ENCODE measurements at regions of chr1 and their contacts with region 1.

Region 1: DNA sequence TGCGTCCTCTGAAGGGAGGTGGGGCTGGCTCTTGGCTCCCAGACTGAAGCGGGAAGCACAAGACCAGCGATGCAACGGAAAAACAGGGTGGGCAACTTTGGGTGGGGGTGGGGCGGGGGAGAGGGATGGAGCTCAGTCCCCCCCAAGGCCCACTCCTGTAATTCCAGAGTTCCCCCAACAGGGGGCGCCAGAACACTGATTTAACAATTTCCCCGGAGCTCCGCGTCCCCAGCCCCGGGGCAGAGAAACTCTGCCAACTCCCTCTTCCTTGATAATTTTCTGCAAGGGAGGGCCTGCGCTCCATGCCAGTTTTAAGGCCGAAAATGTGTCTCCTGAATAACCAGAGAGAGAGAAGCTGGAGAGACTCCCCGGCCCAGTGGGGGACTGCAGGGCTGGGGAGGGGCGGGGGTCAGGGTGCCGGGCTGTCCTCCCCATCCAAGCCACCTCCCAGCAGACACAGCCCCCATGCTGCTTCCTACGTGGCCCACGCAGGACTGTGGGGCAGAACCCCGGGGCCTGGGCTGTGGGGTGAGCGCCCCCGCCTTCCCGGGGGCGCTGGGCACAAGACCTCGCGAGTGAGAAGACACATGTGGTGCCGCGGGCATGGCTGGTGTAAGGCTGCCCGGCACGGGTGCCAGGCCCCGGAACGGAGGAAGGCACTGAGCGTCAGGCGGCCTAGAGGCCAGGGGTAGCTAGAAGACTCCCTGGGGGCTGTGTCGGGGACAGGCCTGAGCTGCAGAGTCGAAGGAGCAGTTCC is 51.4 kb downstream of the KIF21B start:
- DNase-seq: no peak
- ATAC-seq: no peak
- H3K4me3 ChIP-seq: no peak overlapping the region
- H3K27ac ChIP-seq: no peak overlapping the region
- H3K4me1 ChIP-seq: peaks cover 23% of the 10 kb centered on the region
- H3K27me3 ChIP-seq: no peaks in the 10 kb centered on the region
- CTCF ChIP-seq: peak; percentile 62 to 82 (median 75)
- EP300 ChIP-seq: no peak
- POLR2A ChIP-seq: no peak
- RAD21 ChIP-seq: peak; percentile 88

Region 2: GRCh38 chr1:200558866-200559459 is 413.2 kb before region 1 on chr1:
- CTCF ChIA-PET with region 1: interaction called, 25 read pairs
- POLR2A ChIA-PET with region 1: no interaction called
- RAD21 ChIA-PET with region 1: interaction called, 13 read pairs
- SMC1A ChIA-PET with region 1: interaction called, 6 read pairs
- in situ Hi-C with region 1: no loop called
- intact Hi-C with region 1: loop called (anchors 2 kb)
- DNase-seq: no peak
- ATAC-seq: peak; percentile 64
- H3K4me3 ChIP-seq: no peak overlapping the region
- H3K27ac ChIP-seq: no peak overlapping the region
- H3K4me1 ChIP-seq: peaks cover 17% of the 10 kb centered on the region
- H3K27me3 ChIP-seq: no peaks in the 10 kb centered on the region
- CTCF ChIP-seq: peak; percentile 56 to 77 (median 60)
- EP300 ChIP-seq: no peak
- POLR2A ChIP-seq: no peak
- RAD21 ChIP-seq: peak; percentile 82

Region 3: DNA sequence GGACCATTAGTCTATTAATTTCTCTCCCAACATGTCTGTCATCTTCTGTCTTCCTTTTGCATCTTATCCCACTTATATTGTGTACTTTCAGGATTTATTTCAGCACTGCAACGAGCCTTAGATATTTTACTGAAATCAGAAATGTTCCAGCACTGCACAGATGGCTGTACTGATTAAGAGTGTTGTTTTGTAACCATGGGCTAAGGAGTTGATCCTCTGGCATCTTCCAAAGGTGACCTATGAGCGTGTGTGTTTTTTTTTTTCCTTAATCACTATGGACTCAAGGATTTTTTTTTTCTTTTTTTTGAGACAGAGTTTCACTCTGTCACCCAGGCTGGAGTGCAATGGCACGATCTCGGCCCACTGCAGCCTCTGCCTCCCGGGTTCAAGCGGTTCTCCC is 295.3 kb before region 1 on chr1:
- CTCF ChIA-PET with region 1: no interaction called
- POLR2A ChIA-PET with region 1: no interaction called
- RAD21 ChIA-PET with region 1: no interaction called
- SMC1A ChIA-PET with region 1: no interaction called
- in situ Hi-C with region 1: no loop called
- intact Hi-C with region 1: no loop called
- DNase-seq: no peak
- ATAC-seq: no peak
- H3K4me3 ChIP-seq: no peak overlapping the region
- H3K27ac ChIP-seq: no peak overlapping the region
- H3K4me1 ChIP-seq: no peaks in the 10 kb centered on the region
- H3K27me3 ChIP-seq: no peaks in the 10 kb centered on the region
- CTCF ChIP-seq: no peak
- EP300 ChIP-seq: no peak
- POLR2A ChIP-seq: no peak
- RAD21 ChIP-seq: no peak

Region 4: DNA sequence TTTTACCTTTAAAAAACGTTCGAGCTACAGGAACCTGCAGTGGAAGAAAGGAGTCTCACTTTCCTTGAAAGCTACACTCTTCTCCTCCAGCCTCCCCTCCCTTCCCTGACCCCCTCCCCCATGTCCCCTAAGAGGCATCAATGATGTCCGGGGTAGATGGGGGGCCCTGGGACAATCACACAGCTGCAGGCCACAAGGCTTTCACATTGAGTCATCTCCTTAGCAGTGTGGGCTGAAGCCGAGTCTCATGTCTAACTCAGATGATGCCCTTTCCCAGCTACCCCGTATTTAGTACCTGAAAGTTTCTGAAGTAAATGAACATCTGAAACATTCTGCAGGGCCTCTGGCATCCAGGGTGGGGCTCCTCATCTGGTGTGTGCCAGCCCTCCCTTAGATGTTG is 105.6 kb before region 1 on chr1:
- CTCF ChIA-PET with region 1: interaction called, 23 read pairs
- POLR2A ChIA-PET with region 1: interaction called, 6 read pairs
- RAD21 ChIA-PET with region 1: interaction called, 50 read pairs
- SMC1A ChIA-PET with region 1: interaction called, 38 read pairs
- in situ Hi-C with region 1: no loop called
- intact Hi-C with region 1: loop called (anchors 2 kb)
- DNase-seq: peak; percentile 98
- ATAC-seq: peak; percentile 74
- H3K4me3 ChIP-seq: no peak overlapping the region
- H3K27ac ChIP-seq: peak overlapping the region; percentile 71
- H3K4me1 ChIP-seq: peaks cover 71% of the 10 kb centered on the region
- H3K27me3 ChIP-seq: no peaks in the 10 kb centered on the region
- CTCF ChIP-seq: no peak
- EP300 ChIP-seq: peak; percentile 96 to 97
- POLR2A ChIP-seq: no peak
- RAD21 ChIP-seq: peak; percentile 22; the same call in 1 of the 2 replicates

Region 5: DNA sequence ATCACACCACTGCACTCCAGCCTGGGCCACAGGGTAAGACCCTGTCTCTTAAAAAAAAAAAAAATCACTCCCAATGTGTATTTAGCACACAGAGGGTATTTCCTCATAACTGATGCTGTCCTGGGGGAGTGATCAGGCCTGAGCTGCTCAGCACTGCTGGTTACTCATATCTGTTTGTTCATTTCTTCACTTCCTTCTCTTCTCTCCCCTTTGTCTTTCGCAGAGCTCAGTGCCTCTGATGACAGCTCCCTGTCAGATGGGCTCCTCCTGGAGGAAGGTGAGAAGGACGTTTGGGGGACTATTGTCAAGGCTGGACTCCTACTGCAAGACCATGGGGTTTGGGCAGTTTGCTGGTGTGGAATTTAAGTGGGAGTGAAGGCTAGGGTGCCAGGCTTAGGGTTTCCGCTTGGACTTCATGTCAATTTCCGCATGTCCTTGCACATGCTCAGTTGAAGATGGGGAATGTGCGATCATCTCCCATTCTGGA is 64.5 kb before region 1 on chr1:
- CTCF ChIA-PET with region 1: interaction called, 29 read pairs
- POLR2A ChIA-PET with region 1: interaction called, 10 read pairs
- RAD21 ChIA-PET with region 1: interaction called, 31 read pairs
- SMC1A ChIA-PET with region 1: interaction called, 13 read pairs
- in situ Hi-C with region 1: no loop called
- intact Hi-C with region 1: loop called (anchors 2 kb)
- DNase-seq: peak; percentile 67
- ATAC-seq: peak; percentile 74
- H3K4me3 ChIP-seq: no peak overlapping the region
- H3K27ac ChIP-seq: no peak overlapping the region
- H3K4me1 ChIP-seq: peaks cover 15% of the 10 kb centered on the region
- H3K27me3 ChIP-seq: no peaks in the 10 kb centered on the region
- CTCF ChIP-seq: peak in 1 of 3 experiments; percentile 26; a peak in 1 of 6 replicates
- EP300 ChIP-seq: peak; percentile 44 to 60; a peak in 2 of 4 replicates
- POLR2A ChIP-seq: no peak
- RAD21 ChIP-seq: peak; percentile 46

Region 6: GRCh38 chr1:201016211-201016651 is 44.1 kb after region 1 on chr1:
- CTCF ChIA-PET with region 1: interaction called, 138 read pairs
- POLR2A ChIA-PET with region 1: interaction called, 27 read pairs
- RAD21 ChIA-PET with region 1: interaction called, 239 read pairs
- SMC1A ChIA-PET with region 1: interaction called, 37 read pairs
- in situ Hi-C with region 1: no loop called
- intact Hi-C with region 1: no loop called
- DNase-seq: no peak
- ATAC-seq: no peak
- H3K4me3 ChIP-seq: no peak overlapping the region
- H3K27ac ChIP-seq: no peak overlapping the region
- H3K4me1 ChIP-seq: peaks cover 51% of the 10 kb centered on the region
- H3K27me3 ChIP-seq: no peaks in the 10 kb centered on the region
- CTCF ChIP-seq: no peak
- EP300 ChIP-seq: no peak
- POLR2A ChIP-seq: no peak
- RAD21 ChIP-seq: no peak

Region 7: DNA sequence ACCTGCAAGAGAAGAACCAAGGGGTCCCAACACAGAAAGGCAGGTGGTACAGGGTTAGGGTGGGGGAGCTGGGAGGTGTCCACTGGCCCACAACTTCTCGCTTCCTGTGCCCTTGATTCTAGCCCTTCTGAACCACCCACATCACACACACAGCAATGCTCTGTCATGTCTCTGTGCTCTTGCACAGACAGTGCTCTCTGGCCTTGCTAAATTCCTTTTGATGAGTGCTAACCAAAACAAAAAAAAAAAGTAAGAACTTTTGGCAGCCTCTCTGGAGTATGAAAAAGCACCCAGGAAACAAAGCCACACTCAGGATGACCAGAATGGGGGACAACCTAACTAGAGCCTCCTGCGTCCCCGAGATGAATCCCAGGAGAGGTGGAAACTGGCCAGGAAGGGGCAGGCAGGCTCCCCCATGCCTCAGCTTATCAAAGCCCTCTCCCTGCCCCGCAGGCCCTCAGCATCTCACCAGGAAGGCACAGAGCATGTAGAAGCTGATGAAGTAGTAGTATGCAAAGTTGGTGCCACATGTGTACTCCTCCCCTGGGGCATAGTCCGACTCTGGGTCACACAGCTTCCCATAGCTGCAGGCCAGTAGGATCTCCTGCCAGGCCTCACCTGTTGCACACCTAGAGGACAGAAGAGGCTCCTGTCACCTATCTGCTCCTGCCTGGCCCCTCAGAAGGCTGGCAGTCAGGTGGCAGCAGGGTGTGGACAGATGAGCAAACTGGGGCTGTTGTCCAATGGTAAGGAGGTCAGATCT is 78.6 kb after region 1 on chr1:
- CTCF ChIA-PET with region 1: interaction called, 199 read pairs
- POLR2A ChIA-PET with region 1: interaction called, 7 read pairs
- RAD21 ChIA-PET with region 1: interaction called, 128 read pairs
- SMC1A ChIA-PET with region 1: interaction called, 83 read pairs
- in situ Hi-C with region 1: no loop called
- intact Hi-C with region 1: no loop called
- DNase-seq: no peak
- ATAC-seq: peak; percentile 22; the same call in 2 of the 3 replicates
- H3K4me3 ChIP-seq: no peak overlapping the region
- H3K27ac ChIP-seq: no peak overlapping the region
- H3K4me1 ChIP-seq: no peaks in the 10 kb centered on the region
- H3K27me3 ChIP-seq: peaks cover 5 to 7% of the 10 kb centered on the region in 2 experiments; a peak in 3 of 4 replicates
- CTCF ChIP-seq: no peak
- EP300 ChIP-seq: no peak
- POLR2A ChIP-seq: no peak
- RAD21 ChIP-seq: no peak